Endothelial cell of umbilical vein (primary cell): ENCODE measurements at regions of chr7 and their contacts with region 1.

Region 1: GRCh38 chr7:116828281-116828680 is 34.1 kb upstream of the CAPZA2 start:
- DNase-seq: no peak
- H3K4me3 ChIP-seq: no peak overlapping the region
- H3K27ac ChIP-seq: no peak overlapping the region
- H3K4me1 ChIP-seq: no peaks in the 10 kb centered on the region
- H3K27me3 ChIP-seq: no peaks in the 10 kb centered on the region
- CTCF ChIP-seq: no peak
- POLR2A ChIP-seq: no peak

Region 2: DNA sequence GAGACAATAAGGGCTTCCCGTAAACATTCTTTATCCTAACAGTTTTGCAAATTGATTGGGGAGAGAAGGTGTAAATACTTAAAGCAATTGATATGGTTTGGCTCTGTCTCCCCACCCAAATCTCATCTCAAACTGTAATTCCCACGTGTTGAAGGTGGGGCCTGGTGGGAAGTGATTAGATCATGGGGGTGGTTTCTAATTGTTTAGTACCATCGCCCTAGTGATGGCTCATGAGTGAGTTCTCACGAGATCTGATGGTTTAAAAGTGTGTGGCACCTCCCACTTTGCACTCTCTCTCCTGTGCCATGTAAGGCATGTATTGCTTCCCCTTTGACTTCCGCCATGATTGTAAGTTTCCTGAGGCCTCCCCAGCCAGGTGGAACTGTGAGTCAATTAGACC is 12.0 kb after region 1 on chr7:
- CTCF ChIA-PET with region 1: interaction called, 4 read pairs
- POLR2A ChIA-PET with region 1: no interaction called
- dilution Hi-C with region 1: no loop called
- intact Hi-C with region 1: loop called (anchors 2 kb)
- DNase-seq: no peak
- H3K4me3 ChIP-seq: no peak overlapping the region
- H3K27ac ChIP-seq: no peak overlapping the region
- H3K4me1 ChIP-seq: no peaks in the 10 kb centered on the region
- H3K27me3 ChIP-seq: no peaks in the 10 kb centered on the region
- CTCF ChIP-seq: no peak
- POLR2A ChIP-seq: no peak

Region 3: DNA sequence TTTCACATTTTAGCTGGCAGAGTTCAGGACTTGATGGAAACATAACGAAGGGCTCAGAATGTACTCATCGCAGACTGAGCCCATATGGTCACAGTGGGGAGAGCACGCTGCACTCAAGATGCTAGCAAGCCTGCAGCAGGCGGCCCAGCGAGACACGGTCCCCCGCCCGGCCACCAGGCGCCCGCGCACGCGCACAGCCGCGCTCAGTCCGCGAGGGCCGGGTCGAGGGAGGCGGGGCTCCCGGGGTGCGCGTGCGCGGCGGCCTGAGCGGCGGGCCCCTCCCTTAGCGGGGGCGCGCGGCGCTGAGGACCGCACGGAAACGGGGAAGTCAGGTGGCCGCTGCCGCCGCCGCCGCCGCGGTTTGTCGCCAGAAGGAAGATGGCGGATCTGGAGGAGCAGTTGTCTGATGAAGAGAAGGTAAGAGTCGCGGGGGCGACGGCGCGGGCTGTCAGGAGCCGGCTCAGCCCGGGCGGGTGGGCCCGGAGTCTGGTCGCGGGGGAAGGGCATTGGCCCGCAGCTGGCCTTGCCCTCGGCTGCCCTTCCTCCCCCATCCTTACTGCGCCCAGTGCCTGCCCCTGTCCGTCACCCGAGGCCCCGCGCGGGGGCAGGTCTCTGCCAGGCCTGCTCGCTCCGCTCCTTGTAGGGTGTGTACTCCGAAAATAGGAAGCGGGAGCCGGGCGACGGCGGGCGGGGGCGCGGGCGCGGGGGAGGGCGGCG is 34.1 kb after region 1 on chr7 and contains the start of gene CAPZA2:
- CTCF ChIA-PET with region 1: no interaction called
- POLR2A ChIA-PET with region 1: no interaction called
- dilution Hi-C with region 1: no loop called
- intact Hi-C with region 1: no loop called
- DNase-seq: peak; percentile 93
- H3K4me3 ChIP-seq: peak within 1 kb of the TSS; percentile 55 to 95 (median 92)
- H3K27ac ChIP-seq: peak within 1 kb of the TSS; percentile 65
- H3K4me1 ChIP-seq: peaks cover 19% of the 10 kb centered on the region
- H3K27me3 ChIP-seq: no peaks in the 10 kb centered on the region
- CTCF ChIP-seq: peak in 1 of 2 donors; percentile 34
- POLR2A ChIP-seq: peak; percentile 80
- total RNA-seq, gene CAPZA2: 343 and 347 TPM in 2 replicates

Region 4: GRCh38 chr7:116897661-116898060 is 69.4 kb after region 1 on chr7:
- CTCF ChIA-PET with region 1: no interaction called
- POLR2A ChIA-PET with region 1: no interaction called
- dilution Hi-C with region 1: no loop called
- intact Hi-C with region 1: no loop called
- DNase-seq: no peak
- H3K4me3 ChIP-seq: no peak overlapping the region
- H3K27ac ChIP-seq: no peak overlapping the region
- H3K4me1 ChIP-seq: peaks cover 3% of the 10 kb centered on the region
- H3K27me3 ChIP-seq: no peaks in the 10 kb centered on the region
- CTCF ChIP-seq: no peak
- POLR2A ChIP-seq: no peak

Region 5: DNA sequence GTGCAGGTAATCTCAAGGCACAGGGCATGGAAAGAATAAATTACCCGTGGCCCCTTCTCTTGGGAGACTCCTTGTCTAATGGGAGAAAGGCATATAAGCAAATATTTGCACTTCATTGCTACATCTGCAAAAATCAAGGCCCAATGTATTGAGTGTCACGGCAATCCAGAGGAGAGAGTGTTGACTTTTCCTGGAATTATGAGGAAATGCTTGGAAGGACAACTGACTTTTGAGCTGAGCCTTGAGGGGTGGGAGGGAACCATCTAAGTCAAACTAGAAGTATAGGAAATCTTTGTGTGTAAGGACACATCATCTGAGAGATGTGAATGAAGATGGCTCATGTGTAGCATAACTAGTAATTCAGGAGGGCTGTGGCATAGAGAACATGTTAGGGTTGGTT is 1109.8 kb after region 1 on chr7:
- CTCF ChIA-PET with region 1: no interaction called
- POLR2A ChIA-PET with region 1: no interaction called
- dilution Hi-C with region 1: no loop called
- intact Hi-C with region 1: no loop called
- DNase-seq: no peak
- H3K4me3 ChIP-seq: no peak overlapping the region
- H3K27ac ChIP-seq: no peak overlapping the region
- H3K4me1 ChIP-seq: no peaks in the 10 kb centered on the region
- H3K27me3 ChIP-seq: no peaks in the 10 kb centered on the region
- CTCF ChIP-seq: no peak
- POLR2A ChIP-seq: no peak